ENCODE measurements at regions of chr14 and their contacts with region 1.

Region 1: GRCh38 chr14:93115069-93115820 is 480 bp downstream of the ITPK1 start:
- DNase-seq: peak; percentile 82
- H3K4me3 Mint-ChIP-seq: peak overlapping the region; percentile 84
- H3K27ac Mint-ChIP-seq: no peak overlapping the region
- H3K4me1 Mint-ChIP-seq: peaks cover 19% of the 10 kb centered on the region
- H3K27me3 Mint-ChIP-seq: no peaks in the 10 kb centered on the region
- CTCF ChIP-seq: no peak

Region 2: GRCh38 chr14:92677087-92677668 is 438.1 kb before region 1 on chr14:
- CTCF ChIA-PET with region 1: no interaction called
- POLR2A ChIA-PET with region 1: no interaction called
- intact Hi-C with region 1: no loop called
- DNase-seq: no peak
- H3K4me3 Mint-ChIP-seq: no peak overlapping the region
- H3K27ac Mint-ChIP-seq: no peak overlapping the region
- H3K4me1 Mint-ChIP-seq: peaks cover 5% of the 10 kb centered on the region
- H3K27me3 Mint-ChIP-seq: no peaks in the 10 kb centered on the region
- CTCF ChIP-seq: no peak

Region 3: GRCh38 chr14:92768795-92769194 is 346.4 kb before region 1 on chr14:
- CTCF ChIA-PET with region 1: no interaction called
- POLR2A ChIA-PET with region 1: no interaction called
- intact Hi-C with region 1: no loop called
- DNase-seq: no peak
- H3K4me3 Mint-ChIP-seq: no peak overlapping the region
- H3K27ac Mint-ChIP-seq: no peak overlapping the region
- H3K4me1 Mint-ChIP-seq: no peaks in the 10 kb centered on the region
- H3K27me3 Mint-ChIP-seq: no peaks in the 10 kb centered on the region
- CTCF ChIP-seq: no peak

Region 4: DNA sequence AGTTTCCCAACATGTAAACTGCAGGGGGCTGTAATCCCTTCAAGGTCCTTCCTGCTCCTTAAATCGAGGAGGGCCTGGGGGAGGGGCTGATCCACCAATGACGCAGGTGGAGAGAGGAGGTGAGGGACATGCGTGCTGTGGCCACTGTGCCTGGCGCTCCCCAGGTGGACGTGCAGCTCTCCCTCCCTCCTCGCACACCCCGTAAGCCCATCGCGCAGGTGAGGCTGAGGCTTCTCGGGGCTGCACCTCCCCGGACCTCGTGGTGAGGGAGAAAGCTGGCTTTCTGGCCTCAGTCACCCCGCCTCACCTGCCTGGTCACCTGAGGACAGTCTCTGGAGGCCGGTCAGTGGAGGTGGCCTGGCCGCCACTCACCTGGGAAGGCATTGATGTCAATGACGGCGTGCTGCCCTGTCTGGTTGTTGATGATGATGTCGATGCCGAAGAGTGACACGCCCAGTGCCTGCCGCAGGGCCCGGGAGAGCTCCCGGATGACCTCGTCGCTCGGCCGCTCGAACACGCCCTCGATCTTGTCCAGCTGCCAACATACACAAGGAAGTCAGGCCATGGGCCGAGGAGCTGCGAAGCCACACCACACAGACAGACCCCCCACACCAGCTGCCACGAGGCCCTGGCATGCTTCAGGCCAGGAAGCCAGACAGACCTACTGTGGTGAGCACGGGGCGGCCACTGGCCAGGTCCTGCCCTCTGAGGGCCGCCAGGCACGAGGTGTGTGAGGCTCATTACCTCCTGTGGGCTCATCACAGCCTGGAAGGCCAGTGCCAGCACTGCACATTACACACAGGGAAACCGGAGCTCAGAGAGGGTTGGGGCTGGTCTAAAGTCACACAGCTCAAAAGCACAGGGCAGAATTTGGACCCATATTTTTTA is 169.0 kb before region 1 on chr14:
- CTCF ChIA-PET with region 1: interaction called, 74 read pairs
- POLR2A ChIA-PET with region 1: interaction called, 3 read pairs
- intact Hi-C with region 1: no loop called
- DNase-seq: peak; percentile 91
- H3K4me3 Mint-ChIP-seq: no peak overlapping the region
- H3K27ac Mint-ChIP-seq: peak overlapping the region; percentile 70
- H3K4me1 Mint-ChIP-seq: peaks cover 17% of the 10 kb centered on the region
- H3K27me3 Mint-ChIP-seq: no peaks in the 10 kb centered on the region
- CTCF ChIP-seq: no peak

Region 5: GRCh38 chr14:93042968-93043940 is 72.0 kb before region 1 on chr14:
- CTCF ChIA-PET with region 1: interaction called, 3 read pairs
- POLR2A ChIA-PET with region 1: interaction called, 13 read pairs
- intact Hi-C with region 1: loop called (anchors 5 kb)
- DNase-seq: peak; percentile 93
- H3K4me3 Mint-ChIP-seq: peak overlapping the region; percentile 60
- H3K27ac Mint-ChIP-seq: peak overlapping the region; percentile 96
- H3K4me1 Mint-ChIP-seq: peaks cover 66% of the 10 kb centered on the region
- H3K27me3 Mint-ChIP-seq: no peaks in the 10 kb centered on the region
- CTCF ChIP-seq: no peak

Region 6: GRCh38 chr14:93132470-93133065 is 17.3 kb after region 1 on chr14:
- CTCF ChIA-PET with region 1: interaction called, 336 read pairs
- POLR2A ChIA-PET with region 1: interaction called, 117 read pairs
- intact Hi-C with region 1: loop called (anchors 1 kb)
- DNase-seq: peak; percentile 54
- H3K4me3 Mint-ChIP-seq: no peak overlapping the region
- H3K27ac Mint-ChIP-seq: peak overlapping the region; percentile 75
- H3K4me1 Mint-ChIP-seq: peaks cover 16% of the 10 kb centered on the region
- H3K27me3 Mint-ChIP-seq: no peaks in the 10 kb centered on the region
- CTCF ChIP-seq: peak; percentile 19

Region 7: DNA sequence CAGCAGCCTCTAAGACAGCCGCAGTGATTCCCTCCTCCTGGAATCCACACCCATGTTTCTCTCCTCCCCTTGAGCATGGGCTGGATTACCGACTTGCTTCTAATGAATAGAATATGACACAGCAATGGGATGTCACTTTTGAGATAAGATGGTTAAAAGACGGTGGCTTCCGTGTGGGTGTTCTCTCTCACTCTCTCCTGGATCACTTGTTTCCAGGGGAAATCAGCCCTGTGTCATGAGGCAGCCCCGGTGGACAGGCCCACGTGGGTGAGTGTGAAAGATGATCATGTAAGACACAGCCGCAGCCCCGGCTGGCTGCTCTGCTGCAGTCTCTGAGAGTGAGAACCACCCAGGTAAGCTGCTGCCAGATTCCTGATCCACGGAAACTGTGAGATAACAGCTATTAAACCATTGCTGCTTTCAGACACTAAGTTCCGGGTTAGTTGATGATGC is 58.7 kb after region 1 on chr14:
- CTCF ChIA-PET with region 1: interaction called, 61 read pairs
- POLR2A ChIA-PET with region 1: interaction called, 5 read pairs
- intact Hi-C with region 1: loop called (anchors 1 kb)
- DNase-seq: no peak
- H3K4me3 Mint-ChIP-seq: no peak overlapping the region
- H3K27ac Mint-ChIP-seq: no peak overlapping the region
- H3K4me1 Mint-ChIP-seq: no peaks in the 10 kb centered on the region
- H3K27me3 Mint-ChIP-seq: no peaks in the 10 kb centered on the region
- CTCF ChIP-seq: no peak

Region 8: DNA sequence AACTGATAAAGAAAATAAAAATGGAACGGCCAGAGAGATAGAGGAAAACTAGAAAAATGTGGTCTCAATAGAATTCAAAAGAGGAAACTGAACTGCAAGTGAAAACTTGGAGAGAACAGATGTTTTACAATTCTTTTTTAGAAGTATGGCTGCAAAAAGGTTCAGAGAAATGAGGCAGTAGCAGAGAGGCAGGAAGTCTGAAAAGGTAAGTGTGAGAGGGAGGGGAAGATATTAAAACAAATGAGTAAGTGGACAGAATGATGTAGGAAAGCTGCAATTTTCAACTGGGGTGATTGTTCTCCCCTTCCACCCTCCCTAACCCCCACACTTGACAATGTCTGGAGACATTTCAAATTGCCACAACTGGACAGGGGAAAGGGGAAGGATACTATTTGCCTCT is 204.7 kb after region 1 on chr14:
- CTCF ChIA-PET with region 1: no interaction called
- POLR2A ChIA-PET with region 1: no interaction called
- intact Hi-C with region 1: no loop called
- DNase-seq: no peak
- H3K4me3 Mint-ChIP-seq: no peak overlapping the region
- H3K27ac Mint-ChIP-seq: peak overlapping the region; percentile 10
- H3K4me1 Mint-ChIP-seq: peaks cover 52% of the 10 kb centered on the region
- H3K27me3 Mint-ChIP-seq: no peaks in the 10 kb centered on the region
- CTCF ChIP-seq: no peak

Region 9: GRCh38 chr14:93543766-93544165 is 428.5 kb after region 1 on chr14:
- CTCF ChIA-PET with region 1: interaction called, 3 read pairs
- POLR2A ChIA-PET with region 1: no interaction called
- intact Hi-C with region 1: loop called (anchors 5 kb)
- DNase-seq: peak; percentile 35
- H3K4me3 Mint-ChIP-seq: no peak overlapping the region
- H3K27ac Mint-ChIP-seq: no peak overlapping the region
- H3K4me1 Mint-ChIP-seq: no peaks in the 10 kb centered on the region
- H3K27me3 Mint-ChIP-seq: peaks cover 34% of the 10 kb centered on the region
- CTCF ChIP-seq: peak; percentile 43

Region 10: DNA sequence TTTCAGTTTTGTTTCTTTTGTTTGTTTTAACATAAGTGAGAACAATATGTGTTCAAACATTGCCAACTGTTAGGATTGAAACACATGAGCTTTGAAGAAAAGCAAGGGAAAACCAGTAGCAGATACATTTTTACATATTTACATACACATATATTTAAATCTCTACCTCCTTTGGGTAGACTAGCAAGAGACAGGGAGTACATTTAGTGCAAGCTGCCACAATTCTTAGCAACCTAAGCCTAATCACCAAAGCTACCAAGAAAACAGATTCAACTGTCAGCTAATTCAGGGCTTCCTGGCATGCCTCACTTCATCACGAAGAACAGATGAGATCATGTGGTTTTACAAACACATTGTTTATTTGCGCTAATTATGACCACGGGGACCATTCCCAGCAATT is 530.0 kb after region 1 on chr14:
- CTCF ChIA-PET with region 1: no interaction called
- POLR2A ChIA-PET with region 1: no interaction called
- intact Hi-C with region 1: no loop called
- DNase-seq: no peak
- H3K4me3 Mint-ChIP-seq: no peak overlapping the region
- H3K27ac Mint-ChIP-seq: no peak overlapping the region
- H3K4me1 Mint-ChIP-seq: no peaks in the 10 kb centered on the region
- H3K27me3 Mint-ChIP-seq: peaks cover 67% of the 10 kb centered on the region
- CTCF ChIP-seq: no peak

Measured in MCF 10A (cell line).